Colonic mucosa (tissue), 4 donors: ENCODE measurements at regions of chr3 and their contacts with region 1.

Region 1: DNA sequence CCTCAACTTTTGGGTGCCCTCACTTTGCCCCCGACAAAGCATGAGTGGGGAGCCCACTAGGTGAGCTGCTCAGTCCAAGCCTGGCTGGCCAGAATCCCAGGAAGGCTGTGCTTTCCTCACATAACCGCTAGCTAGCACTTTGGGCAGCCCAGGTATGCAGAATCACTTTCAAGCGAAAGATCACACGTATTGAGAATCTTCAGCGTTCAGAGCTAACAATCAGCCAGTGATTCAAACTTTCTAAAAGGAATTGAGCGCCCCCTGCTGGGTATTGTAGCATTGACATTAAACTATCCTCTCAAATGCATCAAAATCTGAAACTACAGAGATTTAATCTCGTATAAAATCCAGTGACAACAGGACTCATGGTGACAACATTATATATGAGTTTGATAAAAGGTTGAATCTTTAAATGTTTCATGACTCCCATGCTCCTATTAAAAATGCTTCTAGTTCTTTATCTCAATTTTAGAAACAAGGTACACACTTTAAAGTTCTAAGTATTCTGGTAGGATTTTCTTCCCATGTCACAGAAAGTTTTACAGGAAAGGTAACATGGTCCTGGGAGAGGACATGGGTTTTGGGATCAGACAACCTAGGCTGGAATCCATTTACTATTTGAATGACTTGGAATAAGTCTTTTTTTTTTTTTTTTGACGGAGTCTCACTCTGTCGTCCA is 11.8 kb downstream of the ANAPC13 start:
- DNase-seq: peak; percentile 91
- H3K4me3 ChIP-seq: no peak overlapping the region
- H3K27ac ChIP-seq: no peak overlapping the region
- H3K4me1 ChIP-seq: no peaks in the 10 kb centered on the region
- H3K27me3 ChIP-seq: no peaks in the 10 kb centered on the region
- CTCF ChIP-seq: peak; percentile 80

Region 2: GRCh38 chr3:134212906-134213665 is 260.9 kb before region 1 on chr3:
- intact Hi-C with region 1: loop called (anchors 5 kb)
- DNase-seq: peak; percentile 92
- H3K4me3 ChIP-seq: no peak overlapping the region
- H3K27ac ChIP-seq: no peak overlapping the region
- H3K4me1 ChIP-seq: no peaks in the 10 kb centered on the region
- H3K27me3 ChIP-seq: no peaks in the 10 kb centered on the region
- CTCF ChIP-seq: peak; percentile 93

Region 3: DNA sequence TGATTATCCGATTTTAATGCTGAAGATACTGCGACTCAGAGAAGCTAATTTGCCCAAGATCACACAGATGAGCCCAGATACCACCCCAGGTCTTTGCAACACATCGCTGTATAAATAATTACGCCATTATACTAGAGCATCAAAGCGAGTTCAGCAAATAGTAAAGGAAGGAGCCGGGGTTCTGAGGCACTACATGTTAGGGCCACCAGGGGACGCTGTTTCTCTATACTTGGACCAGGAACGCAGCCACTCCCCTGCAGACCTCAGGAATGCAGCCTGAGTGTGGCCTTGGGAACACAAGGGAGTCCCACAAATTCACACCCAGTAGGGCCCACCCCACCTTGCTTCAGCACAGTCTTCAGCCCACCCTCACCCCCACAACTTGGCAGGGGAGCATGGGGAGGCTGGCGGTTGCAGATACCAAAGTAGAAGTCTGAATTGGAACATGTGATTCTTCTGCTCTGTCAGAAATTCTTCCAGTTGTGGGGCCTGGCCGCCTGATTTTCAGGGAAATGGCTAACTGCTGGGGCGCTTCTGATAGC is 165.6 kb before region 1 on chr3:
- intact Hi-C with region 1: loop called (anchors 1 kb)
- DNase-seq: peak; percentile 89
- H3K4me3 ChIP-seq: no peak overlapping the region
- H3K27ac ChIP-seq: peak overlapping the region; percentile 29
- H3K4me1 ChIP-seq: peaks cover 7% of the 10 kb centered on the region
- H3K27me3 ChIP-seq: no peaks in the 10 kb centered on the region
- CTCF ChIP-seq: peak; percentile 98

Region 4: GRCh38 chr3:134378384-134378783 is 95.6 kb before region 1 on chr3:
- intact Hi-C with region 1: loop called (anchors 5 kb)
- DNase-seq: peak; percentile 71
- H3K4me3 ChIP-seq: no peak overlapping the region
- H3K27ac ChIP-seq: no peak overlapping the region
- H3K4me1 ChIP-seq: peaks cover 14% of the 10 kb centered on the region
- H3K27me3 ChIP-seq: no peaks in the 10 kb centered on the region
- CTCF ChIP-seq: peak; percentile 55

Region 5: DNA sequence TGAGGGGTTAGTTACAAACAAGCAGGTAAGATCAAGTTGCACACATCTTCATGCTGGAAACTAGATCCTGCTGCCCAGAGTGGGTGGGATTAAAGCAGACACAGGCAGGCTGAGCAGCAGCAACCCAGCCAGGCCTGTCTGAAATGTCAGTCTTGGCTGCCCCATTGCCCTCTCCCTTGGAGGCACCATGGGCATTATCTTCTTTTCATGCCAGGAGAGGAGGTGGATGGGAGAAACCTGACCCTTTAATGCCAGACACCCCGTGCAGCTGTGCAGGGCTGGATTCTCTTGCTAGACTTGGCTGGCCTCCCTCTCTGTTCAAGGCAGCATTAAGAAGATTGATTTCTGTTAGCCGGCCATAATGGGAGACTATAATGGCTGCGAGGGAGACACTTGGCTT is 298.0 kb after region 1 on chr3:
- intact Hi-C with region 1: no loop called
- DNase-seq: no peak
- H3K4me3 ChIP-seq: no peak overlapping the region
- H3K27ac ChIP-seq: no peak overlapping the region
- H3K4me1 ChIP-seq: no peaks in the 10 kb centered on the region
- H3K27me3 ChIP-seq: no peaks in the 10 kb centered on the region
- CTCF ChIP-seq: no peak